ENCODE measurements at regions of chr7 and their contacts with region 1.

Region 1: GRCh38 chr7:44184206-44184872 is 4.9 kb downstream of the GCK start:
- DNase-seq: peak; percentile 78
- ATAC-seq: peak; percentile 98
- H3K4me3 ChIP-seq: peak overlapping the region in 1 of 2 experiments; percentile 26; a peak in 1 of 4 replicates
- H3K27ac ChIP-seq: peak overlapping the region; percentile 39
- H3K4me1 ChIP-seq: peaks cover 18 to 19% of the 10 kb centered on the region in 2 experiments
- H3K27me3 ChIP-seq: no peaks in the 10 kb centered on the region
- CTCF ChIP-seq: no peak
- POLR2A ChIP-seq: no peak
- RAD21 ChIP-seq: peak; percentile 21; the same call in 1 of the 2 replicates

Region 2: GRCh38 chr7:44145969-44146911 is 38.1 kb before region 1 on chr7:
- CTCF ChIA-PET with region 1: no interaction called
- POLR2A ChIA-PET with region 1: no interaction called
- RAD21 ChIA-PET with region 1: no interaction called
- intact Hi-C with region 1: loop called (anchors 5 kb)
- DNase-seq: peak; percentile 41
- ATAC-seq: peak; percentile 99
- H3K4me3 ChIP-seq: no peak overlapping the region
- H3K27ac ChIP-seq: no peak overlapping the region
- H3K4me1 ChIP-seq: peaks cover 0 to 9% of the 10 kb centered on the region in 2 experiments; a peak in 2 of 4 replicates
- H3K27me3 ChIP-seq: no peaks in the 10 kb centered on the region
- CTCF ChIP-seq: no peak
- POLR2A ChIP-seq: no peak
- RAD21 ChIP-seq: no peak